Activated CD4-positive, alpha-beta memory T cell treated with anti-CD3 and anti-CD28 coated beads for 36 hours (primary cell): ENCODE measurements at regions of chr6 and their contacts with region 1.

Region 1: DNA sequence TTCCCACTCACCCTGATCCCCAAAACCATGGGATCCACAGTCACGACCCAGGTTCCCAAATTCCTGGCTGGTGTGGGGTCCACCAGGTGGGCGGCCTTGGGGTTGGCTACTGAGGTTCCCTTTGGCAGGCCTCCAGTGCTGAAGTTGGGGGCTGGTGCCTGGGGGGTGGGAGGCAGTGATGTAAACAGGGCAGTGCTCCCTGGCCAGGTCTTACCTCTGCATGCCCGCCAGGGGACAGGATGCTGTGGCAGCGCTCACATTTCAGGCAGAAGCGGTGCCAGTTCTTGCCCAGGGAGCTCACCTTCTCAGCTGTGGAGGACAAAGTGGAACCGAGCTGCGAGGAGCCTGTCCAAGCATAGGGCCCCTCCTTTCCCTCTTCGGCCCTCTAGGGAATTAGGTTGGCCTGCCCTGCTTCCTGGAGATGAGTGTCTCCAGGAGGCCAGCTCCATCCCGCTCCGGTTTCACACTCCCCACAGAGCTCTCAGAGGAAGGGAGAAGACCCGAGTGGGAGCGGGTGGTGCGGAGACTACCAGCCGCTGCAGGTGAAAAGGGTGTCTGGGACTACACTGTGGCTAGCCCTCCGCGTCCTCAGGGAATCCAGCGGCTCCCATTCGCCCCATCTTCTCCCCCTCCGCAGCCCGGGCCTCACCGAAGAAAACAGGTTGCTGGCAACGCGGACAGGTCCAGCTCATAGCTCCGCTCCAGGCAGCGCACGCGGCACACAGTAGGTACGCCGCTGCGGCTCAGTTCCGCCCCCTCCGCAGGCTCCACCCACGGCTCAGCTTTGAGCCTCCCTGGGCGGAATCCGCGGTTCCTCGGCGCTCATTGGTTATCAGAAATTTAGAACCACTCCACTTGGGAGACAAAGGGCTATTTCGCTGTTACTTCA is at the start of gene CRIP3:
- DNase-seq: peak; percentile 68
- H3K4me3 Mint-ChIP-seq: peak within 1 kb of the TSS; percentile 79
- H3K27ac Mint-ChIP-seq: no peak within 1 kb of the TSS
- H3K4me1 Mint-ChIP-seq: peaks cover 9% of the 10 kb centered on the region
- H3K27me3 Mint-ChIP-seq: no peaks in the 10 kb centered on the region
- total RNA-seq, gene CRIP3: 2.0 to 2.9 TPM

Region 2: DNA sequence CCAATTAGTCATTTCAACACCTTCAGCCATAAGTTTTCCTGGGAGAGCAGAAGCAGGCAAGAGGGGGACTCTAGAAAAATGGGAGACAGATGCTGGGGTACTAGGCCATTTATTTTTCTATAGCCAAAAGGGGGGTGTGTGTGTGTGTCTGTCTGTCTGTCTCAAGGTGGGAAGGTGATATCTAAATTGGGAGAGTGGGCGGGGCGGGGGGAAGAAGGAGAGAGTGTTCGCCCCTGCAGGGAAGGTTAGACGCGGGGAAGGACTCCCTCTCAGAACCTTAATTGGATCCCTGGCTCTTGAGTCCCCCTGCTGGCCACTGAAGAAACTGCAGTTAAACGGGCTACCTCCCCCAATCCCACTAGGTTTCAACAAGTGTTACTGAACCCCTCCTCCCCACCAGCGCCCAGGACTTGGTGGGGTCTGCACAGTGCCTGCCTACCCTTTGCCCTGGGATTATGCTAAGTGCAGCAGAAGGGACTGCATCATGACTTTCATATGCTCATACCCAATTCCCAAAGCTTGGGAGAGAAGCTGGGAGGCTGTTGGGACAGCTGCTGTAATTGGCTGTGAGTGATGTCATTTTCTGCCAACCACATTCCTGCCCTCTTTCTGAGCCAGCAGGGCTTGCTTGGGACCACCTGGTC is 1716.4 kb before region 1 on chr6:
- CTCF ChIA-PET with region 1: no interaction called
- POLR2A ChIA-PET with region 1: no interaction called
- intact Hi-C with region 1: no loop called
- DNase-seq: peak; percentile 86
- H3K4me3 Mint-ChIP-seq: no peak overlapping the region
- H3K27ac Mint-ChIP-seq: no peak overlapping the region
- H3K4me1 Mint-ChIP-seq: no peaks in the 10 kb centered on the region
- H3K27me3 Mint-ChIP-seq: no peaks in the 10 kb centered on the region

Region 3: DNA sequence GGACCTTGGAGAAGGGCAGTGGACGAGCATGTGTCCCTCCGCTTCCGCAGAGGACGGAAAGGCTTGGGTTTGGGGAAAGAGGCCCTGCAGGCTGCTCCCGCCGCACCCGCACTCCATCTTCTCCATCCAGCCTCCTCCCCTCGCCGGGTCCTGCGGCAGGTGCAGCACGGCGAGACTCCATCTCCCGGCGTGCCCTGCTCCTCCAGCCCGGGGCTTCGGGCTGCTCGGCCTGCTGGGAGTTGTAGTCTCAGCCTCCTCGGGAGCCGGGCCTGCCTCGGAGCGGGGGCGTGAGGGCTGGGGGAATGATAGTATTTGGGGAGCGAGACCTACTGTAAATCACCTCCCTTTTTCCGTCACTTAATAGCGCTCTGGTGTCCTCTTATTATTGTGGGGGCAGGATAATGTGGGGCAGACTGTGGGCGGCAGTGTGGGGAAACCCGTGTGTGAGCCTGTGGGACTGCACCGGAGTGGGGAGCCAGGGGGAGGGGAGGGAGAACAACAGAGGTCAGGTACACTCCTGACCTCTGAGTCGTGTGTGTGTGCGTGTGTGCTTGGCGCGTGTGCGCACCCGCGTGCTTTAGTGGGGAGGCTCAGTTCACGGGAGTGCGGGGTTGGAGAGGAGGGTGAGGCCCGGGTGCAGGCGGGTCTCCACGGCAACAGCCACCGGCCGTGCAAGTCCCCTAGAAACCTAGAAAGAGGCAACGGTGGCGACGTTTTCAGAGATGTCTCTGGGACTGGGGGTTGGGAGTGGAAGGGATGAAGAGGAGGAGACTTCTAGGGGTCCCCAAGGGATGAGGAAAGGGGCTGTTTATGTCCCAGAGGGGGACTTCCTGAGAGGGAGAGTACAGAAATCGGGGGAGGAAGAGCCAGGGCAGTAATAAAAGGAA is 61.0 kb before region 1 on chr6:
- CTCF ChIA-PET with region 1: no interaction called
- POLR2A ChIA-PET with region 1: no interaction called
- intact Hi-C with region 1: no loop called
- DNase-seq: peak; percentile 90
- H3K4me3 Mint-ChIP-seq: peak overlapping the region; percentile 79
- H3K27ac Mint-ChIP-seq: peak overlapping the region; percentile 80
- H3K4me1 Mint-ChIP-seq: peaks cover 18% of the 10 kb centered on the region
- H3K27me3 Mint-ChIP-seq: peaks cover 8% of the 10 kb centered on the region

Region 4: DNA sequence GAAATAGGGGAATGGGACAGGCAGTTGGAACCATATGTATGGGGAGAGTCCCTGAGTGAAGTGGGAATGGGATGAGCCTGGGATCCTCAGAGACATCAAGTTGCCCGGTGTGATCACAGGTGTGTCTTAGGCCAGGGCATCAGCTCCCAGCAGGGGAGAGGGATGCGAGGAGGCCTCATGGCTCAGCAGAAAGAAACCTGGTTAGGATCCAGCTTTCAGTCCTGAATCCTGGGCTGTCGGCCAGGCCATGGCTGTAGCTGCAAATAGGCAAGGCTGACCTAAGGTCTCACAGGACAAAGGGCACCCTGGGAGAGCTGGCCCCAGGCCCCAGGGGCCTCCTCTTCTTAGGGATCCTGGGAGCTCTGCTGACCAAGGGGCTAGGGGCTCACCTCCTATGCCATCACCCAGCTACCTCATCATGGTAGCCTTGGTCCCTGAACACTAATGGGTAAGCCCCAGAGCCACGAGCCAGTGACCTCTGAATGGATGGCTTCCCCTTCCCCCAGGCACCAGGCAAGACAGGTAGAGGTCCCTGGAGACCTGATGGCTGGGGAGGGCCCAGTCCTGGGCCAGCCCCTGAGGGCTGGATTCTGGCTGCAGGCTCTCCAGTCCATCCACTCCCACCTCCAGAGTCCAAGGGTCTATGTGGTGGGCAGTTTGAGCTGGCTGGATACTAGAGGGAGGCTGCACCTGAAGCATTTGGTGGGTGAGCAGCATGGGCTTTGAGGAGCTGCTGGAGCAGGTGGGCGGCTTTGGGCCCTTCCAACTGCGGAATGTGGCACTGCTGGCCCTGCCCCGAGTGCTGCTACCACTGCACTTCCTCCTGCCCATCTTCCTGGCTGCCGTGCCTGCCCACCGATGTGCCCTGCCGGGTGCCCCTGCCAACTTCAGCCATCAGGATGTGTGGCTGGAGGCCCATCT is 10.4 kb before region 1 on chr6 and contains the start of gene SLC22A7:
- CTCF ChIA-PET with region 1: interaction called, 18 read pairs
- POLR2A ChIA-PET with region 1: interaction called, 3 read pairs
- intact Hi-C with region 1: no loop called
- DNase-seq: no peak
- H3K4me3 Mint-ChIP-seq: no peak within 1 kb of the TSS
- H3K27ac Mint-ChIP-seq: no peak within 1 kb of the TSS
- H3K4me1 Mint-ChIP-seq: no peaks in the 10 kb centered on the region
- H3K27me3 Mint-ChIP-seq: peaks cover 2% of the 10 kb centered on the region
- total RNA-seq, gene SLC22A7: not detected

Region 5: DNA sequence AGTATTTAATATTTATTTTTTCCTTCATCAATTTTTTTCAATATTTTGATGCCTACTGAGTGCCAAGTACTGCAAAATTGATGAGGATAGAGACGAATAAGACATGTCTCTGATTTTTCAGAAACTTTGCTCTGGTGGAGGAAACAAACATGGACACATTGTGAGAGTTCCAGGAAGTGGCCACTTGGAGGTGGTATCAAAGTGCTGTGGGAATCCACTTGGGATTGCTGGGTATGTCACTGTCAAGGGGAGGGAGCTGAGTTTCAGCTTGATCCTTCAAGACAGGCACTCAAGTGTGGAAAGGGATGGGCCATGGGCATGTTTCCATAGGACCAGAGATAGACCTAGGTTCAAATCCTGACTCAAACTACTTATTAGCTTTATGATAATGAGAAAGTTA is 94.5 kb after region 1 on chr6:
- CTCF ChIA-PET with region 1: interaction called, 21 read pairs
- POLR2A ChIA-PET with region 1: no interaction called
- intact Hi-C with region 1: no loop called
- DNase-seq: no peak
- H3K4me3 Mint-ChIP-seq: no peak overlapping the region
- H3K27ac Mint-ChIP-seq: no peak overlapping the region
- H3K4me1 Mint-ChIP-seq: peaks cover 1% of the 10 kb centered on the region
- H3K27me3 Mint-ChIP-seq: no peaks in the 10 kb centered on the region